ENCODE measurements at regions of chr2 and their contacts with region 1.

Region 1: GRCh38 chr2:208040199-208041171 is 15.2 kb upstream of the PLEKHM3 start:
- DNase-seq: peak; percentile 78
- ATAC-seq: peak; percentile 87
- H3K4me3 Mint-ChIP-seq: no peak overlapping the region
- H3K27ac Mint-ChIP-seq: peak overlapping the region; percentile 78
- H3K4me1 Mint-ChIP-seq: peaks cover 29% of the 10 kb centered on the region
- H3K27me3 Mint-ChIP-seq: no peaks in the 10 kb centered on the region
- CTCF ChIP-seq: peak; percentile 82

Region 2: DNA sequence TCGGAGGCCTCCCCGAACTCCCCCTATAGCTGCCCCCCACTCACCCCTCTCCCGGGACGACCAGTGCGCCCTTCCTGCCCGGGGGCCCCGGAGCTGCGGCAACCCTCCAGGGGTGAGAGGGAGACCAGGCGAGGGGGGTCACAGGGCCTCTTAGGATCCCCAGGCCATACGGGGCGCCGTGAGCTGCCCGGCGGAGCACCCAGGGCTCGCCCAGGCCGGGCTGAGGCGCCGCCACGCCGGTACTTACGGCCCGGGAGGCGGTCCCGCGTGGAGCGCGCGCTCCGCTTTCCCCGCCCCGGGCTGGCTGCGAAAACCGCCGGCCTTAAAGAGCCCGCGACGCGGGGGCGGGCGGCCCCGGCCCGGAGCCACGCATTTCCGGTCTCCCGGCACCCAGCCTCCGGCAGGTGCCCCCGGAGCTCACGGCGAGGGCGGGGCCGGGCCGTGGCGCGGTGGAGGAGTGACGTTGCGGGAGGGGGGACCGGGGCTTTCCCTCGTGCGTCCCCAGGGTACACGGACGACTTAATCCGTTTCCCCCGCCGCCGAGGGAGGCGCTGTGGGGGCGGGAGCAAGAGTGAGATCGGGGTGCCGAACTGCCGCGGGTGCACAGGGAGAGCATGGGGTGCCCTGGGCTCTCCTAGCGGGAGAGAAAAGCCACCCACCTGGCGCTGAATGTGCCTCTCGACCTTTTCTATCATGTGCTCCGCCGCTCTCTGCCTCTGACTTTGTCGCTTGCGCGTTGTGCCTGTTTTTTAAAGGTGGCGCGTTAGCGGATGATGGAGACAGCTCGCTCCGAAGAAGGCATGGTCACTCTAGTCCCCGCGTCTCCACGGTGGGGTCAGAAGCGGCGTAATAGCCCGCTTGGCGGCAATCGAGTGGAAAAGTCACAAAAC is 415.2 kb before region 1 on chr2 and contains the start of gene METTL21A:
- CTCF ChIA-PET with region 1: interaction called, 40 read pairs
- POLR2A ChIA-PET with region 1: no interaction called
- DNase-seq: peak; percentile 73
- ATAC-seq: peak; percentile 51
- H3K4me3 Mint-ChIP-seq: peak within 1 kb of the TSS; percentile 90
- H3K27ac Mint-ChIP-seq: peak within 1 kb of the TSS; percentile 97
- H3K4me1 Mint-ChIP-seq: peaks cover 24% of the 10 kb centered on the region
- H3K27me3 Mint-ChIP-seq: no peaks in the 10 kb centered on the region; the same call in 1 of the 2 replicates
- CTCF ChIP-seq: no peak
- total RNA-seq, gene METTL21A: 56.0 to 57.6 TPM (median 56.4 TPM) in 3 replicates

Region 3: GRCh38 chr2:207746131-207746530 is 294.4 kb before region 1 on chr2:
- CTCF ChIA-PET with region 1: interaction called, 58 read pairs
- POLR2A ChIA-PET with region 1: no interaction called
- DNase-seq: peak; percentile 55
- ATAC-seq: peak; percentile 82
- H3K4me3 Mint-ChIP-seq: no peak overlapping the region
- H3K27ac Mint-ChIP-seq: peak overlapping the region; percentile 31; the same call in 1 of the 2 replicates
- H3K4me1 Mint-ChIP-seq: peaks cover 16% of the 10 kb centered on the region
- H3K27me3 Mint-ChIP-seq: no peaks in the 10 kb centered on the region
- CTCF ChIP-seq: peak; percentile 83

Region 4: DNA sequence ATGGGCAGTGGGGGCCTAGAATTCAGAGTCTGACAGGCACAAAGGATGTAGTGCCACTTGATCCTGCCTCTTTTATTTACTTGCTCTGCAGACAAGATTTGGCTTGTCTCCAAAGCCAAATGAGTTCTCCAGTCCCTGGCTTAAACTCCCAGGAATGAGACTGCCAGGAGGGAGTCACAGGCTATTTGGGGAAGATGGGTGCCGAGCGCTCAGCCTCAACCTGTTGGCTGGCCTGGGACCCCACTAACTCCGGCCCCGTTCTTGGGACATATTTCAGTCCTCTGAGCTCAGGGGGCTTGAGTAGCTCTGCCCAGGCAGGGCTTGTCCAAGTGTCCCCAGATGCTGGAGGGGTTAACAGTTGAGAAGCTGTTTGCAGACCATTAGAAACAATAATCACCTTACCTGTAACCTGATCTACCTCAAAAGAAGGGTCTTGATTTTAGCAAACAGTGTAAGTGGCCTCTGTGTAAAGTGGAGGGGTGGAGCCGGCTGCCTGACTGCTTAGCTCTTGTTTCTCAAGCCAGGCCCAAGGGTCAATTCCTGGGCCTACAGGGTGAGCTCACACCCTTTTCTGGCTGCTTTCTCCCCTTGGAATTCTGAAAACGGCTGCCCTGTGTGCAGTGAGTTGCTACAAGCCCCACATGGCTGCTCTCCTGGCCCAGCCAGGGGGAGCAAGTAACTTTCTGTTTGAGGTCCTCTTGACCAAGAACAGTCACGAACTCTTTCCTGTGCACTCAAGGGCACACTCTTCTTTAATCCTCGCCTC is 243.7 kb before region 1 on chr2:
- CTCF ChIA-PET with region 1: interaction called, 10 read pairs
- POLR2A ChIA-PET with region 1: no interaction called
- DNase-seq: peak; percentile 53
- ATAC-seq: peak; percentile 89
- H3K4me3 Mint-ChIP-seq: no peak overlapping the region
- H3K27ac Mint-ChIP-seq: peak overlapping the region; percentile 98
- H3K4me1 Mint-ChIP-seq: peaks cover 37% of the 10 kb centered on the region
- H3K27me3 Mint-ChIP-seq: peaks cover 3% of the 10 kb centered on the region; the same call in 1 of the 2 replicates
- CTCF ChIP-seq: no peak

Region 5: GRCh38 chr2:207896525-207897295 is 143.8 kb before region 1 on chr2:
- CTCF ChIA-PET with region 1: interaction called, 20 read pairs
- POLR2A ChIA-PET with region 1: no interaction called
- DNase-seq: peak; percentile 68
- ATAC-seq: peak; percentile 94
- H3K4me3 Mint-ChIP-seq: peak overlapping the region; percentile 19; the same call in 1 of the 2 replicates
- H3K27ac Mint-ChIP-seq: peak overlapping the region; percentile 94
- H3K4me1 Mint-ChIP-seq: peaks cover 57% of the 10 kb centered on the region
- H3K27me3 Mint-ChIP-seq: no peaks in the 10 kb centered on the region
- CTCF ChIP-seq: peak; percentile 40; the same call in 1 of the 2 replicates

Region 6: GRCh38 chr2:207974216-207974605 is 66.3 kb before region 1 on chr2:
- CTCF ChIA-PET with region 1: interaction called, 18 read pairs
- POLR2A ChIA-PET with region 1: no interaction called
- DNase-seq: no peak
- ATAC-seq: no peak
- H3K4me3 Mint-ChIP-seq: no peak overlapping the region
- H3K27ac Mint-ChIP-seq: peak overlapping the region; percentile 66
- H3K4me1 Mint-ChIP-seq: peaks cover 42% of the 10 kb centered on the region
- H3K27me3 Mint-ChIP-seq: no peaks in the 10 kb centered on the region
- CTCF ChIP-seq: no peak

Region 7: DNA sequence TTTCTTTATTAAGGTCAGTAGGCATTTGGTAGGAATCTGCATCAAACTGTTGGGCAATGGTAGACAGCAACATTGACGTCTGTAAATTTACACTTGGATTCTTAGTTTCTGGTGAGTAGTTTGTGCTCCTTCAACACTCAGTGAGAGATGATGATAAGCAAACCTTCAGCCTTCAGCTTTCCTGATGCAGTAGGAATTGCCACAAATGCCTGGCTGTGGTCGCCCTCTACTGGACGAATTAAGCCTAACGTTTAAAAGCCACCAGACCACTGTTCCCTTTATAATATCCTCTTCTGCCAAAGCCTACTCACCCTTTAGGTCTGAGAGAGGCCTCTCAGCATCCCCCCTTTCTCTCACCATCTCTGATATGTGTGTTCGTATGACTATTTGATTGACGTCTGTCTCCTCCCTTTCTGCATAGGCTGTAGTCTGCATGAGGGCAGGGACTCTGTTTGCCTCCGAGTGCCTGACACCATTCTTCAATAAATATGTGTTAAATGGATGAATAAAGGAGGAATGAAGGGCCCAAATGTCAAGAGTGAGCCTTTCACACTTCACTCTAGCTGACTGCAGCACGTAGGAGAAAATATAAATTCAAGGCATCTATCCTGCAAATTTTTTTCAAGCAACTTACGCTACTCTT is 31.9 kb after region 1 on chr2:
- CTCF ChIA-PET with region 1: interaction called, 23 read pairs
- POLR2A ChIA-PET with region 1: no interaction called
- DNase-seq: peak; percentile 72
- ATAC-seq: peak; percentile 94
- H3K4me3 Mint-ChIP-seq: no peak overlapping the region
- H3K27ac Mint-ChIP-seq: no peak overlapping the region
- H3K4me1 Mint-ChIP-seq: peaks cover 4% of the 10 kb centered on the region
- H3K27me3 Mint-ChIP-seq: no peaks in the 10 kb centered on the region
- CTCF ChIP-seq: peak; percentile 56; the same call in 1 of the 2 replicates